Gastrocnemius medialis (tissue), 4 donors: ENCODE measurements at regions of chr11 and their contacts with region 1.

Region 1: DNA sequence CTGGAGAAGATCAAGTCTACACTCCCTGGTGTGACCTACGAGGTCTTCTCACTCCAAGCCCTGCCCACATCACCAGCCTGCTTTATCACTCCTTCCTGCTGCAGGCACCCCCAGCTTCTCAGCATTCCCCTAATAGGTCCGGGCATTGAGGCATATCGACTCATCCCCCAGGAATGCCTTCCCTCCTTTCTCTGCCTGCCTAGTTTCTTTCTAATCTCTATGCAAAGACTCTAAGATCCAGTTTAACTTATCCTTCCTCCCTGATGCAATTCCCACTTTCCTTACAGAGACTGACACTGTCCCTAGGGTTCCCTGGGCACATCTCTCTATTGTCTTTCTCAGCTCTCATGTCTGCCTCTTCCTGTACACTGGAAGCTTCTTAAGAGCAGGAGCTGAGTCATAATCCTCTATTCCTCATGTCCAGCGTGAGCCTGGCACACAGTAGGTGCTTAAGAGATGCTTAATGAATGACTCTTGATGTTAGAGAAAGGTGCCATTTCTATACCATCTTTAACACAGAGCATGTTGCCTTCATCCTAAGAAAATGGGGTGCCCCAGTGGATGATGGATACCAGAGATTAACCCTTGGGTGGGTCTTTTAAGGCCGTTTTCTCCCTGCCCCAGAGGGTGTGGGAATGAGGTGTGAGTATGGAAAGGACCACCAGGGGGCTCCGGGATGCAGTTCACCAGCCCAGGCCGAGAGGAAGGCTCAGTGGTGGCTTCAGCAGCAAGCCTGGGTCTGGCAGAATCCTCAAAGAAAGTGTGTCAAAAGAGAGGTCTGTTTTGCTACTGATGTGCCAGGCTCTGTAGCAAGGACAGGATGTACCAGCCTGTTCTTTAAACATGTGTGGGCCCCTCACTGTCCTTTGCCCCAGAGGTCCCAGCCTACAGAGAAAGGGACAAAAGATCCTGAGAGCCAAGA is 34.7 kb downstream of the PARVA start:
- DNase-seq: peak; percentile 34 to 66
- ATAC-seq: peak; percentile 76 to 82
- H3K4me3 ChIP-seq: no peak overlapping the region
- H3K27ac ChIP-seq: peak overlapping the region; percentile 38 to 65 (median 56)
- H3K4me1 ChIP-seq: peaks cover 34 to 35% of the 10 kb centered on the region in 2 donors
- H3K27me3 ChIP-seq: no peaks in the 10 kb centered on the region
- CTCF ChIP-seq: peak; percentile 65 to 80 (median 77)
- POLR2A ChIP-seq: no peak

Region 2: DNA sequence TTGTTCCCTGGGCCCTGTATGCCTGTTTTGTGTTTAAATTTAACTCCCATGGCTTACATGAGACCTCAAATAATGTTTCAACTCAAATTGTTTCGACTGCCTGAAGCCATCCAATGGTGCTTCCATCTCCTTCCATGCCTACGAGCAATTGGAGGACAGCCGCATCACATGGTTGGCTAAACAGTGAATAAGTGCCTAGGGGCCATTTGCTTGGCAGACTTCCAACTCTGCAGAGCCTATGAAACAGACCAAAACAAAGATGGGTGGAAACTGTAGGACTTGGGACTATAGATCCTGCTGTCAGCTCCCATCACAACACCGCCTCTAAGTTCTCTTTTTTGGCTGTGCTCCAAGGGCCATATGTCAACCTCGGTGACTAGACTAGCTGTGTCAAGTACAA is 49.4 kb after region 1 on chr11:
- in situ Hi-C with region 1: no loop called
- intact Hi-C with region 1: no loop called
- DNase-seq: no peak
- ATAC-seq: no peak
- H3K4me3 ChIP-seq: no peak overlapping the region
- H3K27ac ChIP-seq: no peak overlapping the region
- H3K4me1 ChIP-seq: peaks cover 9 to 14% of the 10 kb centered on the region in 2 donors
- H3K27me3 ChIP-seq: no peaks in the 10 kb centered on the region
- CTCF ChIP-seq: no peak
- POLR2A ChIP-seq: no peak

Region 3: DNA sequence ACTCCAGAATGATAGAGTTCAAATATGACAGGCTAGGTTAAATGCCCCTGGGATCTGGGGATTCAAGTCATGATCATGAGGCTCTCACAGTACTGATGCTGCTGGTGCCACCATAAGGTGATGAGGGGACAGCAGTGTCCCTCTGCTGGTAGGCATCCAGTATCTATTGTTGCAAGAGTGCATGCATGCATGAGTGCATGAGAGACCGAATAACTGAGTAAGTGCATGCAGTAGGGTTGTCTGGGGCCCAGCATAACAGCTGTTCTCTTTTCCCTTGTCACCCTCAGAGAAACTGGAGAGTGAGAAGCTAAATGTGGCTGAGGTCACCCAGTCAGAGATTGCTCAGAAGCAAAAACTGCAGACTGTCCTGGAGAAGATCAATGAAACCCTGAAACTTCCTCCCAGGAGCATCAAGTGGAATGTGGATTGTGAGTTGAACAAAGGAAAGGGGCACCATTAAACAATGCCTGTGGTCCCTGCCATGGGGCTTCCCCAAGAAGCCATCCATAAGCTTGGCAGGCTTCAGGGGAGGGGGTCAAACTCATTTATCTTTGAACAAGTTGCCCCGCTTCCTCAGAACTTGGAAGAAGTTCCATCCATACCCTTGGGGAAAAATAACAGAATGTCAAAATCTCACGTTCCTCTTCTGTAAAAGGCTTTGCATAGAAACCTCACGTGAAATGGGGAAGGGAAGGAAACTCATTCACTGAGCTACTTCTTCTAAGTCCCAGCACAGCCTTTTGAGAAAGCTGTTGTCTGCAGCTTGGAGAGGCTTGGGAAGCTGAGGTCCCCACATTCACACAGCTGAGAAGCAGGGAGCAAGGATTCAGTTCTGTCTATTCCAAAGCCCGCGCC is 84.3 kb after region 1 on chr11:
- in situ Hi-C with region 1: no loop called
- intact Hi-C with region 1: loop called (anchors 5 kb)
- DNase-seq: no peak
- ATAC-seq: no peak
- H3K4me3 ChIP-seq: no peak overlapping the region
- H3K27ac ChIP-seq: no peak overlapping the region
- H3K4me1 ChIP-seq: no peaks in the 10 kb centered on the region
- H3K27me3 ChIP-seq: no peaks in the 10 kb centered on the region
- CTCF ChIP-seq: no peak
- POLR2A ChIP-seq: no peak